Uterus (tissue), 4 donors: ENCODE measurements at regions of chr10 and their contacts with region 1.

Region 1: GRCh38 chr10:124741281-124741921 is 2.8 kb downstream of the FAM53B start:
- DNase-seq: peak; percentile 89 to 91
- H3K4me3 ChIP-seq: peak overlapping the region in 1 of 2 donors; percentile 4
- H3K27ac ChIP-seq: peak overlapping the region; percentile 88 to 92
- H3K4me1 ChIP-seq: peaks cover 16 to 35% of the 10 kb centered on the region in 2 donors
- H3K27me3 ChIP-seq: no peaks in the 10 kb centered on the region
- CTCF ChIP-seq: peak; percentile 86 to 97 (median 90)
- POLR2A ChIP-seq: peak; percentile 24 to 30

Region 2: DNA sequence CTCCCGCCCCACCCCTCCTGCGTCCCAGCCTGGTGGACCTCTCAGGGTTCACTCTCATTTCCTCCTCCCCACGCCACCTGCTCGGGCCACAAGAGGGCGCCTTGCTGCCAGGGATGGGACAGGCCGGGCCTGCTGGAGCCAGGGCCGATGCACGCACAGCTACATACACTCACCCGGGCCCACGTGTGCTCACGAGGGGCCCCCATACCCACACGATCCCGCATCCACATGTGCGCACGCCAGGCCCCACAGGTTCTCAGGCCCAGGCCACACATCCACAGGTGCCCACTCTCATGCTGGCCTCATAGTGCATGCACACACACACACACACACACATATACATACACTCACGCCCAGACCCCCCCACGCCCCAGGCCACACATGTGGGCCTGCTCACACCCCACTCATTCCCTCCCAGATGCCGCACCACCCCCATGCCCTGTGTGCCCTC is 211.2 kb before region 1 on chr10:
- intact Hi-C with region 1: loop called (anchors 5 kb)
- DNase-seq: peak; percentile 87
- H3K4me3 ChIP-seq: no peak overlapping the region
- H3K27ac ChIP-seq: no peak overlapping the region
- H3K4me1 ChIP-seq: no peaks in the 10 kb centered on the region
- H3K27me3 ChIP-seq: no peaks in the 10 kb centered on the region
- CTCF ChIP-seq: peak; percentile 89 to 95 (median 90)
- POLR2A ChIP-seq: no peak

Region 3: DNA sequence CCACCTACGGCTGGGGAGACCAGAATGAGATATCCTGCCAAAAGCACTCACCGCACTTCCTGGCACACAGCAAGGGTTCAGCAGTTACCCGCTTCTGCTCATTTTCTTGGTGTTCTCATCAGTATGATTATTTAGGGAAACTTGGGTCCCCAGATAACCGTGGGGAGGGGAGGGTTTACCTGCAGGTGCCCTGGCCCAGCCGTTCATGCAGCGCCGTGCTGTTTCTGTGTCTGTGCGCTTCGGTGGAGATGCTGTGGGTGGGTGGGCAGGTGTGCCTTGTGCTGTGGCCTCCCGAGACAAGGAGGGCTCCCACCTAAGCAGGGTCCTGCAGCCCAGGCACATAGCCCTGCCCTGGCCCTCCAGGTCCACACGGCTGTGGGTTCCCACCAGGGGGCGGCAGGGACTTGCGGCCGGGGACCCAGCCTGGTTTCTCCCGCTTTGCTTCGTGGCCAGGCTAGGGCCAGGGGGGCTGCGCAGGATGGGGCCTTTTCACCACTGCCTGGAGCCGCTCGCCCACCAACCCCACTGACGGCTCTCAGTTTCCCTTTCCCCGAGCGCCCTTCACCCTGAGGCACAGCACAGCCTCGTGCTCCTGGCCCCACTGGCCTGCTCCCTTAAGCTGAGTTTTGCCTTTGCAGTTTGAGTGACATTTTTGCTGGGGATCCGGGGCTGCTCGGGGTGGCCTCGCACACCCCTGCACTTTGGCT is 201.3 kb before region 1 on chr10:
- intact Hi-C with region 1: loop called (anchors 5 kb)
- DNase-seq: peak; percentile 75 to 79
- H3K4me3 ChIP-seq: no peak overlapping the region
- H3K27ac ChIP-seq: peak overlapping the region in 1 of 2 donors; percentile 10
- H3K4me1 ChIP-seq: peaks cover 0 to 7% of the 10 kb centered on the region in 2 donors
- H3K27me3 ChIP-seq: no peaks in the 10 kb centered on the region
- CTCF ChIP-seq: peak; percentile 86 to 96 (median 90)
- POLR2A ChIP-seq: peak in 1 of 2 donors; percentile 31

Region 4: DNA sequence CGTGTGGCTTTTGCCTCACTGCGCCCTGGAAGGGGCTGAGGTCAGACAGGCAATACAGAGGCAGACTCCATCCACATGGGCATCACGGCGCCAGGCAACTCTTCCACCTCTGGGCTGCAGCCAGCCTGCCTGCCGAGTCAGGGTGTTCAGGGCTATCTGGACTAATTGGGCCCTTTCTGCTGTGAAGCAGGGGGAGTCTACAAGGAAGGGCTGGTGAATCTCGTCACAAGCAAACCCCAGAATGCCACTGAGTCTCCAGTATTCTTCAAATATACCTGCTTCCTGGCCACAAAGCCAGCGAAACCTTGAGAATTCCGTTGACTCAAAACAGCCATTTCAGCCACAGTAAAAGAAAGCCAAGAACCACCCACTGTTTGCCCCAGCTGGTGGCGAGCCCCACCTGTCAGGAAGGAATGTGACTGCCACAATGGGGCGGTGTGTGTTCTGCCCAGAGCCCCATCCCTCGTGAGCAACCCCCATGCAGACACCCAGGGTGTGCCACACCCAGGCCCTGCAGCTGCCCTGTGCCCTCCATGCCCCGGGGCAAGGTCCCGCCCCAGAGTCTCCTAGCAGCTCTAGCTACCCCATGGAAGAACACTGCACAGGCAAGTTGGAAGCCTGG is 114.5 kb before region 1 on chr10:
- intact Hi-C with region 1: no loop called
- DNase-seq: no peak
- H3K4me3 ChIP-seq: no peak overlapping the region
- H3K27ac ChIP-seq: no peak overlapping the region
- H3K4me1 ChIP-seq: peaks cover 0 to 23% of the 10 kb centered on the region in 2 donors
- H3K27me3 ChIP-seq: no peaks in the 10 kb centered on the region
- CTCF ChIP-seq: no peak
- POLR2A ChIP-seq: no peak

Region 5: DNA sequence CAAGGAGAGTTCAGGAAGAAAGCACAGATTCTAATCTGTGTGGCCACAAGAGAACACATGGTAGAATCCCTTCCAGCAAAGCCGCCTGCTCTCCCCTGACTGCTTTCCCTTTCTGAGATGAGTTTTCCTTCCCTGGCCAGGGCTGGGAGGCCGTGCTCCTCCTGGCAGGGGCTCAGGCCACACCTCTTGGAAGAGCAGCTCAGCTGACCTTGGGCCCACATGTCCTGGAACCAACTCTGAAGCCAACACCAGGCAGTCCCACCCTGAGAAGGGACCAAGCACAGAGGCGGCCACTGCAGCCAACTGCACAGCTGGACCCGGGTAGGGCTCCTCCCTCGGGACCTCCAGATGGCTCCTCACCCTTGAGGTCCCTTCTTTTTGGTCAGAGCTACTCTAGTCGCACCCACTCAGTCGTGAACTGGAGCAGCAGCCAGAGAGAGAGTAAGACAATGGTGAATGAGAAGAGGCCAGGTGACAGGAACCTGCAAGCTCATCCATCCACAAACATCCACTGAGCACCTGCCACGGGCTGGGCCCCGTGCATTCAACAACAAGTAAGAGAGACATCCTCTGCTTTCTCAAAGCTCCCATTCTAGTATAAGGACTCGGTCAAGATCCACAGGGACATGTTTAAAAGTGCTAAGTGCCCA is 37.5 kb before region 1 on chr10:
- intact Hi-C with region 1: loop called (anchors 2 kb)
- DNase-seq: peak; percentile 82 to 87
- H3K4me3 ChIP-seq: no peak overlapping the region
- H3K27ac ChIP-seq: peak overlapping the region; percentile 84 to 92
- H3K4me1 ChIP-seq: peaks cover 66 to 76% of the 10 kb centered on the region in 2 donors
- H3K27me3 ChIP-seq: no peaks in the 10 kb centered on the region
- CTCF ChIP-seq: no peak
- POLR2A ChIP-seq: peak in 1 of 2 donors; percentile 37

Region 6: GRCh38 chr10:124949543-124949942 is 208.1 kb after region 1 on chr10:
- intact Hi-C with region 1: no loop called
- DNase-seq: no peak
- H3K4me3 ChIP-seq: no peak overlapping the region
- H3K27ac ChIP-seq: no peak overlapping the region
- H3K4me1 ChIP-seq: peaks cover 0 to 6% of the 10 kb centered on the region in 2 donors
- H3K27me3 ChIP-seq: no peaks in the 10 kb centered on the region
- CTCF ChIP-seq: no peak
- POLR2A ChIP-seq: no peak

Region 7: DNA sequence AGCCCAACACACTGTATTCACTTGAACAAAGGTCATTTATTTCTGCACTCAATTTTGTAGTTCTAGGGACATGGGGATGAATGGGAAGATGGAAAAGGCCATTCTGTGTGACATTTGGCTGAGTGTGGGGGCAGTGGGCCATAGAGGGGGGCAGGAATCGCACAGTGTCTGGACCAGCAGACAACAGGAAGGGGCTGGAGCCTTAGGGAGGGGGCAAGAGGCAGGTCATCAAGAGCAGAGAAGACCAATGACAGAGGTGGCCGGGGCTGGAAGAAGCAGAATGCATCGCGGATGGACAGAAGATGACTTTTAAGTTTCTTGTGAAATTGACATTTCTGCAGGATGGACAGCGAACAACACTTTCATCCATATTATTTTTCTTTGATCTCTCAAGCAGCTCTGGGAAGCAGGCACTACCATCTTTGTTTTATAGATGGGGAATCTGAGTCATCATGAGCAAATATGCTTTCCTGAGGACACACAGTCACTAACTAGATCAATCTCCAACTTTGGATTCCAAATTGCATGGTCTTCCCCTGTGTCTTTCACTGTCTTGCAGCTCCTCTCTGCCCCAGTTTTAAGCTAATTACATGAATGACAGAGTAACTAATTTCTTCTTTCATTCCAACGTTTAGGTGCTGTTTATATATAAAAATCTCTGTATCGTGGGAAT is 1445.2 kb after region 1 on chr10:
- intact Hi-C with region 1: no loop called
- DNase-seq: no peak
- H3K4me3 ChIP-seq: no peak overlapping the region
- H3K27ac ChIP-seq: no peak overlapping the region
- H3K4me1 ChIP-seq: no peaks in the 10 kb centered on the region
- H3K27me3 ChIP-seq: no peaks in the 10 kb centered on the region
- CTCF ChIP-seq: no peak
- POLR2A ChIP-seq: no peak